Activated naive CD4-positive, alpha-beta T cell treated with anti-CD3 and anti-CD28 coated beads for 36 hours (primary cell): ENCODE measurements at regions of chr1 and their contacts with region 1.

Region 1: GRCh38 chr1:211323156-211324063 is 3.2 kb upstream of the TRAF5 start:
- DNase-seq: peak; percentile 85
- H3K4me3 Mint-ChIP-seq: no peak overlapping the region
- H3K27ac Mint-ChIP-seq: no peak overlapping the region
- H3K4me1 Mint-ChIP-seq: peaks cover 58% of the 10 kb centered on the region
- H3K27me3 Mint-ChIP-seq: no peaks in the 10 kb centered on the region

Region 2: DNA sequence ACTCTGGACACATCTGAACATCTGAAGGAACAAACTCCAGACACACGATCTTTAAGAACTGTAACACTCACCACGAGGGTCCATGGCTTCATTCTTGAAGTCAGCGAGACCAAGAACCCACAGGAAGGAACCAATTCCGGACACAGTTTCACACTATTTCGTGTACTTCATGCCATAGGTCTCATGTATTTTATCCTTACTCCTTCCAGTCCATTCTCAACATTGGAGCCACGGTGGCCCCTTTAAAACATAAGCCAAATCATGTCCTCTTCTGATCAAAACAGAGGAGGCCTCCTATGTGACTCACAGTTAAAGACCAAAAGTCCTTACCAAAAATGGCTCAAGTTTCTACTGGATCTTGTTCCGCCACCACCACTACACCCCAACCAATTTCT is 94.0 kb before region 1 on chr1:
- CTCF ChIA-PET with region 1: no interaction called
- intact Hi-C with region 1: no loop called
- DNase-seq: no peak
- H3K4me3 Mint-ChIP-seq: peak overlapping the region; percentile 0
- H3K27ac Mint-ChIP-seq: peak overlapping the region; percentile 36
- H3K4me1 Mint-ChIP-seq: peaks cover 25% of the 10 kb centered on the region
- H3K27me3 Mint-ChIP-seq: no peaks in the 10 kb centered on the region

Region 3: DNA sequence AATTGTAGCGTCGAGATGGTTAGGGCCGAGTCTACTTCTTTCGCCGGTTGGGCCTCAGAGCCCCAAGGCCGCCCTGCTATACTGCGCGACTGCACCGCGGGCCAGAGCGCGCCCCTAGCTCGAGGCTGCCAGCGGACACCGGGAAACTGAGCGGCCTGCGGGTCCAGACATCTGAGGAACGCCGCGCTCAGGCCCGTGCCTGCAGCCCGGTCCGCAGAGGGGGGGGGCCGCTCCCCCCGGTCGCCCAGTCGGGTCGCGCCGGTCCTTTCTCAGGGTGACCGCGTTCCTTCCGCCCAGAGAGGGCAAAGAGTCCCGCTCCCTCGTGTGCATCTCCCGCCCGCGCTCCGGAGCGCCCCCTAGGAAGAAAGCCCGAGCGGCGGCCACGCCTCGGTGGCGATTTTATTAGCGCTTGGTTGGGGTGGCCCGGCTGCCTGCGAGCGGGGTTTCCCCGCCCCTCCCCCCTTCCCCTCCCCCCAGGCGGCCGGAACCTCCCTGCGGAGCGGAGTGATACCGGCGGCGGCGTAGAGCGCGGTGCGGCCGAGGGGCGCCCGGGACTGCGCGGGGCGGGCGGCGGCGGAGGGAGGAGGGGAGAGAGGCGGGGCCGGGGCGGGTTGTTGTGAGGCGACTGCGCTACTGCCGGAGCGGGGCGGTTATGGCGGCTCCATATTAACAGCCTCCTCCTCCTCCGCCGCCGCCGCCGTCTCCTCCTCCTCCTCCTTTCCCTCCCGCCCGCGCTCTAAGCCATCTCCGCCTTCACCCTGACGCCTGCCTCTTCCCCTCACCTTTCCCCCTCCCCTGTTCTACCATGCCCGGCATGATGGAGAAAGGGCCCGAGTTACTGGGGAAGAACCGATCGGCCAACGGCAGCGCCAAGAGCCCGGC is 64.4 kb before region 1 on chr1 and contains the start of gene RCOR3:
- CTCF ChIA-PET with region 1: interaction called, 3 read pairs
- intact Hi-C with region 1: loop called (anchors 1 kb)
- DNase-seq: peak; percentile 93
- H3K4me3 Mint-ChIP-seq: peak within 1 kb of the TSS; percentile 90
- H3K27ac Mint-ChIP-seq: peak within 1 kb of the TSS; percentile 96
- H3K4me1 Mint-ChIP-seq: peaks cover 16% of the 10 kb centered on the region
- H3K27me3 Mint-ChIP-seq: no peaks in the 10 kb centered on the region
- total RNA-seq, gene RCOR3: 28.9 to 30.8 TPM

Region 4: DNA sequence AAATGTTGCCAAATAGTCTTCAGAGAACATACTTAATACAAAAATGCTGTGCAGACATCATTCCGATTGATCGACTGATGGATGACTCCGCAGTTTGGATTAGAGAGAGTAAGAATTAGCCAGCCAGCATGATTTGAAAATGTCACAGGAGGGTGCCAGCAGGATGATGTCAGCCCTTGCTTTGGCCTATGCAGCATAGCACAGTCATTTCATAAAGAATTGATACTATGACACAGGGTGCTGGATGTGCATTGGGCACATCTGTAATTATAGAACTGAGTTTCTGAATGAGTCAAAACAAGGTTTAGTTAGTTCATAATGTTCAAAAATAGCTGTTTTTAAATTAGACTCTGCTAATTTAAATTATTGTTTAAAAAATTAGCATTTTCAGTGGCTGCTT is 18.4 kb before region 1 on chr1:
- CTCF ChIA-PET with region 1: interaction called, 4 read pairs
- intact Hi-C with region 1: loop called (anchors 1 kb)
- DNase-seq: peak; percentile 73
- H3K4me3 Mint-ChIP-seq: no peak overlapping the region
- H3K27ac Mint-ChIP-seq: peak overlapping the region; percentile 25
- H3K4me1 Mint-ChIP-seq: peaks cover 35% of the 10 kb centered on the region
- H3K27me3 Mint-ChIP-seq: no peaks in the 10 kb centered on the region

Region 5: DNA sequence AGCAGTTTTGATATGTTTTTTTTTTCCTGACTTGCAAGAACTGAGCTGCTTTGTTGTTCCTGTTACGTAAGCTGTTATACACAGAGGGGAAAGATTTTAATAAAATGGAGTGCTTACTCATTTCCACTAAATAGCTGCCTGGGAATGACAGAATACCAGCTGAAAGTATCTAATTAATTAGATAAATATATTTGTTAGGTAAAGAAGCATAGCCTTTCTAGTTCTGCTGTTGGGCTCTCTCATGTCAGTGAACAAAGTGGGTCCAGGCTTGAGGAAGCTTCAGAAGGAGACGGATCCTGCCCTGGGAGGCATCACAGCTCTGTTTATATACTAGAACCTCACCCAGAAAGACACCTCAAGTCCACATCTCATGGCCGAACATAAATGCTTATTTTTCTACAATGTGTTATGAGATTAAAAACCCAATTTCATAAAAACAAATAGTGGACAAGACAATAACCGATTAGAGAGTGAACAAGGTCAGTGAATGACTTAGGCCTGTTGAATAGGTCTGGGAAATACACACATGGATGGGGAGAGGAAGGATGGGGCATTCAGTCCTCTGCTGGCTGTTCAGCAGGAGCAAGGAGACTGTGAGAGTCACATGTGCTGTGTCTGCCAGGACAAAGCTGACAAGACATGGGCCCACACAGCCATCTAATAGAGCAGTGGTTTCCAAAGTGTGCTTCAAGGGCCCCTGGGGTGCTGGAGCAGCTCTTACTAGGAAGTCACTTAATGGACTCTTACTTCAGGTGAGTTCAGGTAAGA is 23.9 kb after region 1 on chr1:
- CTCF ChIA-PET with region 1: interaction called, 11 read pairs
- intact Hi-C with region 1: loop called (anchors 2 kb)
- DNase-seq: no peak
- H3K4me3 Mint-ChIP-seq: no peak overlapping the region
- H3K27ac Mint-ChIP-seq: no peak overlapping the region
- H3K4me1 Mint-ChIP-seq: peaks cover 66% of the 10 kb centered on the region
- H3K27me3 Mint-ChIP-seq: no peaks in the 10 kb centered on the region

Region 6: GRCh38 chr1:211393203-211393602 is 69.8 kb after region 1 on chr1:
- CTCF ChIA-PET with region 1: no interaction called
- intact Hi-C with region 1: no loop called
- DNase-seq: no peak
- H3K4me3 Mint-ChIP-seq: no peak overlapping the region
- H3K27ac Mint-ChIP-seq: no peak overlapping the region
- H3K4me1 Mint-ChIP-seq: no peaks in the 10 kb centered on the region
- H3K27me3 Mint-ChIP-seq: no peaks in the 10 kb centered on the region

Region 7: GRCh38 chr1:211420389-211420788 is 97.0 kb after region 1 on chr1:
- CTCF ChIA-PET with region 1: interaction called, 6 read pairs
- intact Hi-C with region 1: loop called (anchors 1 kb)
- DNase-seq: peak; percentile 9
- H3K4me3 Mint-ChIP-seq: no peak overlapping the region
- H3K27ac Mint-ChIP-seq: no peak overlapping the region
- H3K4me1 Mint-ChIP-seq: peaks cover 16% of the 10 kb centered on the region
- H3K27me3 Mint-ChIP-seq: no peaks in the 10 kb centered on the region

Region 8: DNA sequence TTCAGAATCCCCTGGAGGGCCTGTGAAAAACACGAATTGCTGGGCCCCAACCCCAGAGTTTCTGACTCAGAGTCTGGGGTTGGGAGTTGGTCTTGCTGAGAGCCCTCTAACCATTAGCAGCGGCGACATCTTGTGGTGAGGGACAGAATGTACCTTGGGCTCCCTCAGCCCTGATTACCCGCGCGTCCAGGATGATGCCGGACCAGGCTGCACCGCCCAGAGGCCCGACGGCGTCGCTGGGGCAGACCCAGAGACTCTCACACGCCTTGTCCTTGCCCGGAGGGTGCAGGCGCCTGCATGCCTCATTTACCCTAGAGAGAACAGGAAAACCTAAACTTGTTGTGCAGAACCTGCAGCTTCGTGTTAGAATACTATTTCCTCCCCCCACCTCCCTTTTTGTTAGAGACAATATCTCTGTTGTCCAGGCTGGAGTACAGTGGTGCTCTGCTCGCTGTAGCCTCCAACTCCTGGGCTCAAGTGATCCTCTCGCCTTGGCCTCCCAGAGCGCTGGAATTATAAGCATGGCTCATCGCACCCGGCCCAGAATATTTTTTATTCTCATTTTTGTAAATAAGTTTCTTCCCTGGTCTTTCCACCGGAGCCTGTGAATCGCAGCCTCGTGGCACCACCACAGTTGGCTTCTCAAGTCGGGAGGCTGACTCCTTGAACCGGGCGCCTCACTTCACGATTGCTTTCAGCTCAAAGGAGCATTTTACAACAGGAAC is 190.8 kb after region 1 on chr1:
- CTCF ChIA-PET with region 1: interaction called, 38 read pairs
- intact Hi-C with region 1: loop called (anchors 1 kb)
- DNase-seq: peak; percentile 90
- H3K4me3 Mint-ChIP-seq: peak overlapping the region; percentile 23
- H3K27ac Mint-ChIP-seq: no peak overlapping the region
- H3K4me1 Mint-ChIP-seq: peaks cover 23% of the 10 kb centered on the region
- H3K27me3 Mint-ChIP-seq: no peaks in the 10 kb centered on the region

Region 9: GRCh38 chr1:211675230-211676105 is 352.1 kb after region 1 on chr1 and contains the start of gene NEK2:
- CTCF ChIA-PET with region 1: no interaction called
- intact Hi-C with region 1: loop called (anchors 5 kb)
- DNase-seq: peak; percentile 97
- H3K4me3 Mint-ChIP-seq: peak within 1 kb of the TSS; percentile 86
- H3K27ac Mint-ChIP-seq: peak within 1 kb of the TSS; percentile 76
- H3K4me1 Mint-ChIP-seq: peaks cover 7% of the 10 kb centered on the region
- H3K27me3 Mint-ChIP-seq: no peaks in the 10 kb centered on the region
- total RNA-seq, gene NEK2: 60.8 to 62.3 TPM

Region 10: GRCh38 chr1:211830330-211831142 is 507.1 kb after region 1 on chr1 and contains the start of gene LPGAT1:
- CTCF ChIA-PET with region 1: no interaction called
- intact Hi-C with region 1: no loop called
- DNase-seq: peak; percentile 75
- H3K4me3 Mint-ChIP-seq: peak within 1 kb of the TSS; percentile 82
- H3K27ac Mint-ChIP-seq: peak within 1 kb of the TSS; percentile 75
- H3K4me1 Mint-ChIP-seq: peaks cover 47% of the 10 kb centered on the region
- H3K27me3 Mint-ChIP-seq: no peaks in the 10 kb centered on the region
- total RNA-seq, gene LPGAT1: 18.6 to 21.7 TPM